ENCODE measurements at regions of chr3 and their contacts with region 1.

Region 1: DNA sequence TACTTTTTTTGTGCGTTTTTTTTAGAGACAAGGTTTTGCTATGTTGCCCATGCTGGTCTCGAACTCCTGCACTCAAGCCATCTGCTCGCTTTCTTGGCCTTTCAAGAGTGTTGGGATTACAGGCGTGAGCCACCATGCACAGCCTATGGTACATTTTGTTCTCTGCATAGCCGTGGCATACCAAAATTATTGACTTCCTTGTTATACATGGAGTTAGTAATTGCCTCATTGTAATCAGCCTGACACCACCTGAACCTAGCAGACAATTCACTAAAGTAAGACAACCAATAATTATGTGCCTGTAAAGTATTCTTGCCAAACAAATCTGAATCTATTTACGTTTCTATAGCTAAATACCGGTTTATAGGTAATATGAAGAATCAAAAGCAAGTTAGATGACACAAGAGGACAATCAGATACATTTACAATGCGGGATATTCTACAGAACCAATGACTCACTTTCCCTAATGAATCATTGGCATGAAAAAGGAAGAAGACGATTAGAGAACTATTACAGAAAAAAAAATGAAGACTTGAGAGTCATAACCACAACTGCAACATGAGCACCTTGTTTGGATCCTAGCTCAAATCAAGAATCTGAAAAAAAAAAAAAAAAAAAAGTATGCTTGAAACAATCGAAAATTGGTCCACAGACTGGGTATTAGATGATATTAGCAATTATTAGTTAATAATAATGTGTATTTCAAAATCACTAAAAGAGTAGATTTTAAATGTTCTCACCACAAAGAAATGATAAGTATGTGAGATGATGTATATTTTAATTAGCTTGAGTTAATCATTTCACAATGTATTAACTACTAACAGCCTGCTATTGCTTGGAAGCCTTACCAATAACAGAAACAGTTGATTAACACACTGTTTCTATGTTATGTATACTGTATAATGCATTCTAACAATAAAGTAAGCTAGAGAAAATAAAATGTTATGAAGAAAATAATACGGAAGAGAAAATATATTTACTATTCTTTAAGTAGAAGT is 7.1 kb downstream of the GUCA1C start:
- DNase-seq: peak; percentile 51
- ATAC-seq: no peak; the same call in 1 of the 2 replicates
- H3K4me3 ChIP-seq: no peak overlapping the region
- H3K27ac ChIP-seq: no peak overlapping the region
- H3K4me1 ChIP-seq: no peaks in the 10 kb centered on the region
- H3K27me3 ChIP-seq: no peaks in the 10 kb centered on the region
- CTCF ChIP-seq: no peak
- POLR2A ChIP-seq: no peak
- RAD21 ChIP-seq: no peak

Region 2: DNA sequence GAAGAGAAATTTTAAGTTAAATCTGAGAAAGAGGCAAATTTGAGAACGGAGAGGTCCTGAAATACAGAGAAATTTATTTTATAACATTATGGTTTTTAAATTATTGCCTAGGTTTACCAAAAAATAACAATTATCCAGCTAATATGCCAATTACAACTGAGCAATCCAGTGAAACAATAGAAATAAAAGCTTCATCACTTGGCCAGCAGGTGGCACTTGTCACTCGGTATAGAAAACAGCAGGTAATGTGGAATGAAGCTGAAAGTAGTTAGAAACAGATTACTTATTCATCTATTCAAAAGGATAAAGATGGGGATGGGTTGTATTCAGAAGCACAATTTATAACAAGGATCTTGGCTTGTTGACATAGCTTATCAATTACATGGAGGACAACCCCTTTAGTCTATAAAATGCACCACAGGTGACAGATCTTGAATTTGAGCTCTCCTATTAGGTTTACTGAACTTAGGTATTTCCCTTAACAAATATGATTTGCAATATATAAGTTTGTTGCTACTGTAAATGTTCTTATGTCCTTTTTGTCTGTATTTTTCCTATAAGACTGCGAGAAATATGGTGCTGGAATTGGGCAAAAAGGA is 77.2 kb after region 1 on chr3:
- CTCF ChIA-PET with region 1: no interaction called
- POLR2A ChIA-PET with region 1: interaction called, 14 read pairs
- dilution Hi-C with region 1: no loop called
- in situ Hi-C with region 1: no loop called
- intact Hi-C with region 1: no loop called
- DNase-seq: peak; percentile 47
- ATAC-seq: peak; percentile 63; the same call in 1 of the 2 replicates
- H3K4me3 ChIP-seq: no peak overlapping the region
- H3K27ac ChIP-seq: no peak overlapping the region
- H3K4me1 ChIP-seq: no peaks in the 10 kb centered on the region
- H3K27me3 ChIP-seq: no peaks in the 10 kb centered on the region
- CTCF ChIP-seq: peak; percentile 62
- POLR2A ChIP-seq: no peak
- RAD21 ChIP-seq: peak; percentile 49

Region 3: DNA sequence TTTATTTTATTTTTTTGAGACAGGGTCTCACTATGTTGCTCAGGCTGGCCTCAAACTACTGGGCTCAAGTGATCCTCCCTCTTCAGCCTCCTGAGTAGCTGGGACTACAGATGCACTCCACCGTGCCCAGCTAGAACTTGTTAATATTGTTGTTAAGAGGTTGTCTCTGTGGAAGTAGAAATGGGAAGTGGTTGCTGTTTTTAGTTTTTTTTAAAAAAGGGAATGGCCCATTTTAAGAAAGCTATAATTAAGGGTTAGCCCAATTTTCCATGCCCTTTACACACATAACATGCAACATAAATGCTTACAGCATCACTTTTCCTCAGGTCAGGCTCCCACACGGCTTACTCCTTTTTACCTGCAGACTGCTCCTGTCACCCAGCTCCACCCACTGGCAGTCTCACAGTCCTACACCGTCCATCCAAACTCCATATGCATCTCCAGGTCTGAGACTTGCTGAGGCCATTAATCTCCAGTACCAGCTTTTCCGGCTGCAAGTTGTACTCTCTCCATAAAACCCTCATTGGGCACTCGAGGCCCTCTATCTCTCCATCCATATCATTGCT is 151.6 kb after region 1 on chr3:
- CTCF ChIA-PET with region 1: no interaction called
- POLR2A ChIA-PET with region 1: no interaction called
- dilution Hi-C with region 1: no loop called
- in situ Hi-C with region 1: no loop called
- intact Hi-C with region 1: no loop called
- DNase-seq: no peak
- ATAC-seq: no peak
- H3K4me3 ChIP-seq: no peak overlapping the region
- H3K27ac ChIP-seq: no peak overlapping the region
- H3K4me1 ChIP-seq: no peaks in the 10 kb centered on the region
- H3K27me3 ChIP-seq: no peaks in the 10 kb centered on the region
- CTCF ChIP-seq: 0 out of 2 replicates have a peak, but pooled peaks have one; percentile 0
- POLR2A ChIP-seq: no peak
- RAD21 ChIP-seq: no peak

Region 4: GRCh38 chr3:110806924-110807323 is 1860.3 kb after region 1 on chr3:
- CTCF ChIA-PET with region 1: no interaction called
- POLR2A ChIA-PET with region 1: interaction called, 11 read pairs
- dilution Hi-C with region 1: no loop called
- in situ Hi-C with region 1: no loop called
- intact Hi-C with region 1: no loop called
- DNase-seq: peak; percentile 53
- ATAC-seq: peak; percentile 70; the same call in 1 of the 2 replicates
- H3K4me3 ChIP-seq: no peak overlapping the region
- H3K27ac ChIP-seq: peak overlapping the region; percentile 60; the same call in 1 of the 2 replicates
- H3K4me1 ChIP-seq: peaks cover 3% of the 10 kb centered on the region
- H3K27me3 ChIP-seq: no peaks in the 10 kb centered on the region
- CTCF ChIP-seq: no peak
- POLR2A ChIP-seq: no peak
- RAD21 ChIP-seq: no peak

Measured in IMR-90 (cell line).